A673 (cell line): ENCODE measurements at regions of chr7 and their contacts with region 1.

Region 1: DNA sequence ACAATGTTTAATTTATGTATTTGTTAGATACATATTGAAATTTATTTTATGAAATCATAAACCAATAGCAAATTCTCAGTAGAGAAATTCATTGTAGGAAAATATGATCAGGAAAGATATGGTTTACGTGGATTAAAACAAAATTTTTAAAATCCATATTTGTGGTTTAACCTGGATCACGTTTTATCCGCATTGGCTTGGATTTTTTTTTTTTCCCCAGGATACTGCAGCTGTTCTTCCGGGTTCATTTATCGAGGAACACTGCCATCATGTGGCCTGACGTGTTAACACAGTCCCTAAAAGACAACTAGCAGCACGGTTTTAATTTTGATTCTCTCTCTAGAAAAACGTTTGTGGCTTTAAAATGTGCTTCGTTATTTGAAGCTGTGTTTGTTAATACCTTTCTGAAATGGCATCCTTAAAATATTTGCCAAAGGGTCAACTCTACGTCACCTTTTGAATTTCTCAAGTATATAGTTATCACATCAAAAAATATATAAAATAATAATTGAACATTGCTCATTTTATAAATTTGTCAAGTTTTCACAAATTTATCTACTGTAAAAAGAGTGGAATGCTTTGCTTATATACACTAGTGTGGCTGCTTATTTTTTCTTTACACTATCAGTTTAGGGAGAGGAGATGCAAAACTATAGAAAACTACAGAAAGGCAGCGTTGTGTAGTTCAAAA is 8.7 kb upstream of the ASB4 start:
- DNase-seq: peak; percentile 85
- H3K4me3 ChIP-seq: no peak overlapping the region
- H3K27ac ChIP-seq: peak overlapping the region; percentile 9
- H3K4me1 ChIP-seq: peaks cover 28% of the 10 kb centered on the region
- H3K27me3 ChIP-seq: no peaks in the 10 kb centered on the region
- CTCF ChIP-seq: peak; percentile 85

Region 2: DNA sequence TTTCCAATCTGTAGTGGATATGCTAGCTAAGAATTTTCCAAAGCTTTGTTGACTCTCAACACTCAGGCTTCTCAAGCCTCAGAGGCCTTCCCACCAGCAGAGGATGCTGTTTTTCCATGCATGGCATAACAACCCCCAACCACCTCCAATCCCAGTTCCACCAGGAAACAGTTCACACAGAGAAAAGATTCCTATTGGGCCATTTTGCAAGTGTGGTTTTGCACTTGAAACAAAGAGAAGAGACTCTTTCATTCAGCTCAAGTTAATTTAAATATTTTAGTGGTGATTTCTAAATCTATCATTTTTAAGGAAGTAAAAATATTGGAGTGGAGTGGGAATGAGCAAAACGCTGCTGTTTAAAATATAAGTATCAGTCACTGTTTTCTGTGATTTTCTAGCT is 1188.0 kb before region 1 on chr7:
- CTCF ChIA-PET with region 1: interaction called, 5 read pairs
- POLR2A ChIA-PET with region 1: no interaction called
- intact Hi-C with region 1: loop called (anchors 5 kb)
- DNase-seq: peak; percentile 93
- H3K4me3 ChIP-seq: no peak overlapping the region
- H3K27ac ChIP-seq: no peak overlapping the region
- H3K4me1 ChIP-seq: peaks cover 11% of the 10 kb centered on the region
- H3K27me3 ChIP-seq: no peaks in the 10 kb centered on the region
- CTCF ChIP-seq: peak; percentile 97

Region 3: GRCh38 chr7:94657771-94658693 is 819.0 kb before region 1 on chr7:
- CTCF ChIA-PET with region 1: no interaction called
- POLR2A ChIA-PET with region 1: no interaction called
- intact Hi-C with region 1: loop called (anchors 10 kb)
- DNase-seq: peak; percentile 97
- H3K4me3 ChIP-seq: peak overlapping the region; percentile 63
- H3K27ac ChIP-seq: no peak overlapping the region
- H3K4me1 ChIP-seq: peaks cover 22% of the 10 kb centered on the region
- H3K27me3 ChIP-seq: no peaks in the 10 kb centered on the region
- CTCF ChIP-seq: no peak

Region 4: GRCh38 chr7:95190515-95190914 is 286.5 kb before region 1 on chr7:
- CTCF ChIA-PET with region 1: no interaction called
- POLR2A ChIA-PET with region 1: no interaction called
- intact Hi-C with region 1: loop called (anchors 5 kb)
- DNase-seq: no peak
- H3K4me3 ChIP-seq: no peak overlapping the region
- H3K27ac ChIP-seq: no peak overlapping the region
- H3K4me1 ChIP-seq: no peaks in the 10 kb centered on the region
- H3K27me3 ChIP-seq: no peaks in the 10 kb centered on the region
- CTCF ChIP-seq: peak; percentile 32; the same call in 1 of the 2 replicates

Region 5: DNA sequence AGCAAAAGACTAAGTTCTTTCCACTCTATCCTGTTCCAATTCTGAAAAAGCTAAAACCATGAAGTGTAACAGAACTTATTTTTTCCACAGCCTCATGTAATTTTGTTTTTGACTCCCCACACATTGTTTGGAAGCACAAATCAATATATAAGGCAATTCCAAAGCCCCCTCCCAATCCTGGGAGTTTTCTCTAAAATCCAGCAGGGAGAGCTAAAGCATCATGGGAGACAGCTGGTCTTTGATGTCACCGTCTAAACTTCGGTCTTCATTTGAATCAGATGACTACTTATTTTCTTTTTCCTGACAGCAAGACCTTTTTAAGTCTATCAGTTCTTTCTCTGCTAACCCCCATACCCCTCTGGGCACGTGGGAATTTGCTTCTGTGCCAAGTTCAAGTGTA is 119.4 kb before region 1 on chr7:
- CTCF ChIA-PET with region 1: interaction called, 4 read pairs
- POLR2A ChIA-PET with region 1: no interaction called
- intact Hi-C with region 1: loop called (anchors 1 kb)
- DNase-seq: peak; percentile 12
- H3K4me3 ChIP-seq: no peak overlapping the region
- H3K27ac ChIP-seq: no peak overlapping the region
- H3K4me1 ChIP-seq: no peaks in the 10 kb centered on the region
- H3K27me3 ChIP-seq: no peaks in the 10 kb centered on the region
- CTCF ChIP-seq: peak; percentile 49

Region 6: GRCh38 chr7:95577137-95577536 is 100.1 kb after region 1 on chr7:
- CTCF ChIA-PET with region 1: no interaction called
- POLR2A ChIA-PET with region 1: no interaction called
- intact Hi-C with region 1: no loop called
- DNase-seq: no peak
- H3K4me3 ChIP-seq: no peak overlapping the region
- H3K27ac ChIP-seq: no peak overlapping the region
- H3K4me1 ChIP-seq: no peaks in the 10 kb centered on the region
- H3K27me3 ChIP-seq: no peaks in the 10 kb centered on the region
- CTCF ChIP-seq: no peak